T-cell (primary cell): ENCODE measurements at regions of chr13 and their contacts with region 1.

Region 1: GRCh38 chr13:46160471-46161066 is 21.4 kb downstream of the LCP1 start:
- DNase-seq: peak in 15 of 35 experiments; percentile 12 to 92 (median 36)
- ATAC-seq: peak; percentile 76 to 83 (median 80)
- H3K4me3 ChIP-seq: no peak overlapping the region
- H3K4me3 Mint-ChIP-seq: peak overlapping the region; percentile 61 to 72 (median 64)
- H3K27ac ChIP-seq: peak overlapping the region; percentile 78
- H3K27ac Mint-ChIP-seq: peak overlapping the region; percentile 90 to 93
- H3K4me1 ChIP-seq: peaks cover 28 to 39% of the 10 kb centered on the region in 2 experiments
- H3K4me1 Mint-ChIP-seq: peaks cover 51 to 62% (median 61%) of the 10 kb centered on the region in 3 donors
- H3K27me3 ChIP-seq: no peaks in the 10 kb centered on the region
- H3K27me3 Mint-ChIP-seq: no peaks in the 10 kb centered on the region

Region 2: GRCh38 chr13:45989607-45990006 is 171.0 kb before region 1 on chr13:
- CTCF ChIA-PET with region 1: no interaction called
- POLR2A ChIA-PET with region 1: no interaction called
- DNase-seq: no peak
- ATAC-seq: no peak
- H3K4me3 ChIP-seq: no peak overlapping the region
- H3K4me3 Mint-ChIP-seq: no peak overlapping the region
- H3K27ac ChIP-seq: no peak overlapping the region
- H3K27ac Mint-ChIP-seq: no peak overlapping the region
- H3K4me1 ChIP-seq: no peaks in the 10 kb centered on the region
- H3K4me1 Mint-ChIP-seq: peaks cover 2 to 14% (median 9%) of the 10 kb centered on the region in 3 donors
- H3K27me3 ChIP-seq: no peaks in the 10 kb centered on the region
- H3K27me3 Mint-ChIP-seq: no peaks in the 10 kb centered on the region

Region 3: DNA sequence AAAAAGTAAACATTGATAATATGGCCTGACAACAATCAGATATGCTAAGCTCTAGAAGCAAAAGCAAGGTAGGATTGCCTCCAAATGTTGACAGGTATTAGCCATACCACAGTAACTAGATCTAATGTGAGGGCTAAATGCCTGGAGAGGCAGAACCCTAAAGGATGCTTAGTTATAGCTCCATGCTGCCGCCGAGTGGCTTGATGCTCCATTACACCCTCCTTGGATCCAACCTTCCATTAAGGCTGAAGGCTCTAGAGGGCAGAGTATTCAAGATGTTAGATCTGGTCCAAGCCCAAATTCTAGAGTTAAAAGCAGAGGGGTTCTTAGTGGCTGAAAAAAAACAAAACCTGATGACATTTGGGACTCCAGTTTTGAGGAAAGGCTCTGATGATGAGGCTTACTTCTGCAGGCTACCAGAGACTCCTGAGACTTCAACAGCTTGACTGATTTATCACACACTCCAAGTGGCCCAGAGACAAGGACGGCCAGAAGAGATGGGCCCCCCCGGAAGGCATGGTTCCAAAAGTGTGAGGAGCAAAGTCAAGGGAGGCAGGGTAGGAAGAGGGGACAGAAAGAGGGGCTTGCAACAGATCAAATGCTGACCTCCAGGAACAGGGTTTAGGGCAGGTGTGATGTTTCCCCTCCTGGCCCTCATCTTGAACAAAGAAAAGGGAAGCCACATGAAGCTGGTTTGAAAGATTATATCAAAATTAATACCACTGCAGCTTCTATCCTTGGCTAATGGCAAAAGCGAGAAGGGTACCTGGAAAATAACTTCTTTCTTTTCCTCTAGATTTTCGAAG is 33.8 kb before region 1 on chr13:
- CTCF ChIA-PET with region 1: interaction called, 10 to 23 read pairs
- POLR2A ChIA-PET with region 1: interaction called in 1 of 2 experiments, 3 read pairs
- DNase-seq: peak; percentile 40 to 84 (median 67)
- ATAC-seq: peak; percentile 82 to 92 (median 89)
- H3K4me3 ChIP-seq: no peak overlapping the region
- H3K4me3 Mint-ChIP-seq: peak overlapping the region in 1 of 3 donors; percentile 19
- H3K27ac ChIP-seq: peak overlapping the region; percentile 62
- H3K27ac Mint-ChIP-seq: peak overlapping the region; percentile 91 to 92
- H3K4me1 ChIP-seq: peaks cover 20 to 25% of the 10 kb centered on the region in 2 experiments
- H3K4me1 Mint-ChIP-seq: peaks cover 41 to 52% (median 51%) of the 10 kb centered on the region in 3 donors
- H3K27me3 ChIP-seq: no peaks in the 10 kb centered on the region
- H3K27me3 Mint-ChIP-seq: no peaks in the 10 kb centered on the region

Region 4: DNA sequence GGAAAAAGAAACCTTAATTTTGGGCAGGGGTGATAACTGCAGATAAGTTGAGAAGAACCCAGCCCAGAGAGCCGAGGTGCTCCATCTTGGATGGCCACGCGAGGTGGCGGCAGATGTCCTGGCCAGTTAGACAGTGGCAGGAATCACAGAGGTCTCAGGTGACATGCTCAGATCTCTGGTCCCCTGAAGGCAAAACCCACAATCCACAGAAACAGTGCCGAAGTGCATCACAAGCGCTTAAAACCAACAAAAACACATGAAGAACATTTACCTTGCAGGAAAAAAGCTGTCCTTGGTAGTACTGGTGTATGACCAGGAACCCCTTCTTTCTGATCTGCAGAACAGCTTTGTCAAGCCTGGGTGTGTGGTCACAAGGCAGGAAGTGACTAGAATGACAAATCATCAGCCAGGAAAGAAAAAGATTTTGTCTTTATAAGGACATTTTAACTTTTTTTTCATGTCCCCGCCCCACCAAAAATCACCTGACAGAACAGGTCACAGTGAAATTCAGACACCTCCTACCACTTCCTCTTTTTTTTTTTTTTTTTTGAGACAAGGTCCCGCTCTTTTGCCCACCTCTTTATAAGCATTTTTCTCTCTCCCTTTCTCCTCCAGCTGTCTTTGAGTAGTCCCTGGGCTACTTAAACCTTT is 21.4 kb after region 1 on chr13 and contains the start of gene LCP1:
- CTCF ChIA-PET with region 1: interaction called, 13 to 54 read pairs
- POLR2A ChIA-PET with region 1: interaction called, 5 to 12 read pairs
- DNase-seq: peak; percentile 41 to 92 (median 80)
- ATAC-seq: peak; percentile 74 to 82 (median 78)
- H3K4me3 ChIP-seq: peak within 1 kb of the TSS; percentile 78 to 99
- H3K4me3 Mint-ChIP-seq: peak within 1 kb of the TSS; percentile 90 to 99 (median 94)
- H3K27ac ChIP-seq: peak within 1 kb of the TSS; percentile 83
- H3K27ac Mint-ChIP-seq: peak within 1 kb of the TSS; percentile 86 to 93
- H3K4me1 ChIP-seq: peaks cover 40 to 49% of the 10 kb centered on the region in 2 experiments
- H3K4me1 Mint-ChIP-seq: peaks cover 59 to 70% (median 65%) of the 10 kb centered on the region in 3 donors
- H3K27me3 ChIP-seq: no peaks in the 10 kb centered on the region
- H3K27me3 Mint-ChIP-seq: no peaks in the 10 kb centered on the region
- total RNA-seq, gene LCP1: 338 to 574 (median 413) TPM

Region 5: DNA sequence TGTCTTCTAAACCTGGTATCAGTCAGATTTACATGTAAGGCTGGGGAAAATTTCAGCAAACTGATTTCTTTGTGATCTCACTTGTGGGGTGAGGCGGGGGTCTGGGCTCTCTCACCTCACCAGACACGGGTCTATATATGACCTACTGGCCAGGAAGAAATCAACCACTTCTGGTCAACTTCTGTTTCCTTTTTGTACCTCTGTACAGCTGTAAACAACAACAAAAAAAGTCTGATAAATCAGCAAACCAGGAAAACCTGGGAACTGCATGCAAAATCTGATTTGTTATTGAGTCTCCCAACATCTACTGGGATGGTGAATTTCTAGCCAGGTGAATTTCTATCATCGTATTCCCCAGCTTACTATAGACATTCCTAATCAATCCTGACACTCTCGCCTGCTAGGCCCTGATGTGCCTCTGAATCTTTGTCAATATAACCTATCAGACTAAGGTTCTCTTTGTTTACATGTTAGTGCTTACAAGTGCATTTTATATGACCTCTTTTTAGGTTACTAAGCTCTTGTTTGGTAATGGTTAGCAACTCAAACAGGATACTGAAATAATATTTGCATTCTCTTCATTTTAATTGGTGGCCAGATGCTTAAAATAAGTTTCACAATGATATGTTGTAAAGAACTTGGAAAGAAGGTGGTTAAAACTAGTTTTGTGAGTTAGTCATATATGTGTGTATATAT is 128.8 kb after region 1 on chr13:
- CTCF ChIA-PET with region 1: interaction called, 10 to 20 read pairs
- POLR2A ChIA-PET with region 1: interaction called in 1 of 2 experiments, 4 read pairs
- DNase-seq: no peak
- ATAC-seq: no peak
- H3K4me3 ChIP-seq: no peak overlapping the region
- H3K4me3 Mint-ChIP-seq: no peak overlapping the region
- H3K27ac ChIP-seq: no peak overlapping the region
- H3K27ac Mint-ChIP-seq: no peak overlapping the region
- H3K4me1 ChIP-seq: peaks cover 7% of the 10 kb centered on the region in 2 experiments
- H3K4me1 Mint-ChIP-seq: peaks cover 21 to 25% (median 23%) of the 10 kb centered on the region in 3 donors
- H3K27me3 ChIP-seq: no peaks in the 10 kb centered on the region
- H3K27me3 Mint-ChIP-seq: no peaks in the 10 kb centered on the region

Region 6: DNA sequence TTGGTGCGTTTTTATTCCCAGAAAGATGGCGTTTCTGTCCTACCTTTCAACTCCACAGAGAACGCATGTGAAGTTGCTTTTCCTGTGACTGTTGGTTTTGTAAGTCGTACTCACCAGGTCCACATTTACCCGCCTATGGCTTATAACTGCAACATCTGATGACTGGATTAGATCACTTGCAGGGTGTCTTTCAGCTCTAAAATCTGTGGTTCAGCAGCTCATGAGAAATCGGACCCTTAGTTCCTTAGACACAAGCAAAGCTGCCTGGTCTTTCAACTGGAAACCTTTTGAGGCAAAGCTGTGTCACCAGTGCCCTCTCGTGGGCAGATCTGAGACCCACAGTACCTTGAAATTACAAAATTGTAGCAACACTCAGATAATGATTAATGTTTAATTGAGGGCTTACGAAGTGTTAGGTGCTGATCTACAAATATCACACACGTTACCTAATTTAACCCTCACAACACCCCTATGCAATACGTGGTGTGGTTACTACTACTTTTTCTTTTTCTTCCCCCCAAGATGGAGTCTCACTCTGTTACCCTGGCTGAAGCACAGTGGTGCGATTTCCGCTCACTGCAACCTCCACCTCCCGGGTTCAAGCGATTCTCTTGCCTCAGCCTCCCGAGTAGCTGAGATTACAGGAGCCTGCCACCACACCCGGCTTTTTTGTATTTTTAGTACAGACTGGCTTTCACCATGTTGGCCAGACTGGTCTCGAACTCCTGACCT is 161.1 kb after region 1 on chr13:
- CTCF ChIA-PET with region 1: interaction called, 8 to 16 read pairs
- POLR2A ChIA-PET with region 1: interaction called in 1 of 2 experiments, 3 read pairs
- DNase-seq: peak; percentile 49 to 87 (median 70)
- ATAC-seq: peak; percentile 85 to 92 (median 88)
- H3K4me3 ChIP-seq: peak overlapping the region; percentile 42 to 43
- H3K4me3 Mint-ChIP-seq: peak overlapping the region; percentile 76 to 82 (median 79)
- H3K27ac ChIP-seq: peak overlapping the region; percentile 69
- H3K27ac Mint-ChIP-seq: peak overlapping the region; percentile 95 to 96
- H3K4me1 ChIP-seq: peaks cover 14 to 15% of the 10 kb centered on the region in 2 experiments
- H3K4me1 Mint-ChIP-seq: peaks cover 33 to 46% (median 36%) of the 10 kb centered on the region in 3 donors
- H3K27me3 ChIP-seq: no peaks in the 10 kb centered on the region
- H3K27me3 Mint-ChIP-seq: peaks cover 0 to 6% of the 10 kb centered on the region in 2 donors